Naive thymus-derived CD8-positive, alpha-beta T cell (primary cell): ENCODE measurements at regions of chr10 and their contacts with region 1.

Region 1: GRCh38 chr10:75210282-75211006 is at the start of gene VDAC2:
- DNase-seq: peak; percentile 94 to 100 (median 97)
- ATAC-seq: peak; percentile 84 to 85
- H3K4me3 Mint-ChIP-seq: peak within 1 kb of the TSS; percentile 95 to 100 (median 100)
- H3K27ac Mint-ChIP-seq: peak within 1 kb of the TSS; percentile 99 to 100 (median 100)
- H3K4me1 Mint-ChIP-seq: peaks cover 11 to 35% (median 27%) of the 10 kb centered on the region in 4 donors
- H3K27me3 Mint-ChIP-seq: no peaks in the 10 kb centered on the region
- polyA plus RNA-seq, gene VDAC2: 145 to 155 (median 151) TPM

Region 2: DNA sequence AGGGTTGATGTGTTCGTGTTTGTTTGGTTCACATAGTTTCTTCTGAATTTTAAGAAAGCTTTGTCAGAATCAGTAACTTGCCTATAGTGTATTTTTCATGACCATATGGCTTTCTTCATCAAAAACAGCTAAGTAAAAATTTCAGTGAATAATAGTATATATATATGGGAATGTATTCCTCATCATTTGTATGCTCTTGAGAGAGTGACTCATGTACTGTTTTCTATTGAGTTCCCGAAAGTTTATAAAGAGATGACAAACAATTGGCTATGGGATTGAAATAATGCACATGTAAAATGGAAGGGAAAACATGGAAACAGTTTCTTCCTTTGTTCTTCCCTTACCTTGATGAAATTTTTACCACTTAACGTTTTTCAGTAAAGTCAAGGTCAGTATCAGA is 327.6 kb before region 1 on chr10:
- POLR2A ChIA-PET with region 1: no interaction called
- DNase-seq: no peak
- ATAC-seq: no peak
- H3K4me3 Mint-ChIP-seq: no peak overlapping the region
- H3K27ac Mint-ChIP-seq: no peak overlapping the region
- H3K4me1 Mint-ChIP-seq: peaks cover 30 to 79% (median 70%) of the 10 kb centered on the region in 4 donors
- H3K27me3 Mint-ChIP-seq: no peaks in the 10 kb centered on the region

Region 3: GRCh38 chr10:75111367-75111906 is 99.0 kb before region 1 on chr10 and contains the start of gene SAMD8:
- POLR2A ChIA-PET with region 1: interaction called, 37 read pairs
- DNase-seq: peak; percentile 91 to 97 (median 94)
- ATAC-seq: peak; percentile 76 to 81
- H3K4me3 Mint-ChIP-seq: peak within 1 kb of the TSS; percentile 83 to 97 (median 92)
- H3K27ac Mint-ChIP-seq: peak within 1 kb of the TSS; percentile 91 to 98 (median 96)
- H3K4me1 Mint-ChIP-seq: peaks cover 28 to 63% (median 59%) of the 10 kb centered on the region in 4 donors
- H3K27me3 Mint-ChIP-seq: no peaks in the 10 kb centered on the region
- polyA plus RNA-seq, gene SAMD8: 6.3 to 10.6 (median 6.4) TPM

Region 4: DNA sequence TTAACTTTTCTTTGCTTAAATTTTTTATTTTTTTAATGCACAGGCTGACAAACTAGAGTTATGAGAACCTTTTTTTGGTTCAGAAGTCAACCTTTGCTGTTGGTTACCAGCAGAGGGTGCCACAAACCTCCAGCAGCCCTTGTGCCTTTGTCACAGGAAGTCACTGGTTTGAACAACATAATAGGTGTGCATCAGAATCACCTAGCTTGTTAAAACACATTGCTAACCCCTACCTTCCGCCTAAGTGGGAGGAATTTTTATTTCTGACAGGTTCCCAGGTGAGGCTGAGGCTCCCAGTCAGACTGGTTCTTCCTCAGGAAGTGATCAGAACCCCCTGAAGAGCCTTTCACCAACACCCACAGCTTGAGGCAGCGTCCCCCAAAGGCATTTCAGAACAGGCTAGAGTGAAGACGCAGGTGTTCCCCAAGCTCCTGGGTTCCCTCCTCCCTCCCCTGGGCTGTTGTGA is 22.4 kb before region 1 on chr10:
- POLR2A ChIA-PET with region 1: interaction called, 56 read pairs
- DNase-seq: peak; percentile 37 to 87 (median 76)
- ATAC-seq: peak; percentile 97 to 99
- H3K4me3 Mint-ChIP-seq: peak overlapping the region in 6 of 10 donors; percentile 26 to 68 (median 50)
- H3K27ac Mint-ChIP-seq: peak overlapping the region; percentile 83 to 98 (median 95)
- H3K4me1 Mint-ChIP-seq: peaks cover 6 to 14% (median 6%) of the 10 kb centered on the region in 4 donors
- H3K27me3 Mint-ChIP-seq: no peaks in the 10 kb centered on the region

Region 5: DNA sequence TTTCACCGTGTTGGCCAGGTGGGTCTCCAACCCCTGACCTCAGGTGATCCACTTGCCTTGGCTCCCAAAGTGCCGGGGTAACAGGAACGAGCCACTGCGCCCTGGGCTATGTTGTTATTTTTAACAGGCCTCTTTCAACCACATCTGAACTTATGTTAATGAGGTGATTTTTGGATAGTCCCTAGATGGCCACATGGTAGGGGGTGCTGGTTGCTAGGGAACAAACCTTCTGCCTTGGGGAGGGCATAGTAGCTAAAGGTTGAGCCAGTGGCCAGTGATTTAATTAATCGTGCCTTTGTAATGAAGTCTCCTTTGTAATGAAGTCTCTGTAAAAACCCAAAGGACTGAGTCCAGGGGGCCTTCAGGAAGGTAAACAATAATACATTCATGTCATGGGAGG is 16.2 kb after region 1 on chr10:
- POLR2A ChIA-PET with region 1: interaction called, 132 read pairs
- DNase-seq: no peak
- ATAC-seq: no peak
- H3K4me3 Mint-ChIP-seq: no peak overlapping the region
- H3K27ac Mint-ChIP-seq: peak overlapping the region in 9 of 10 donors; percentile 28 to 83 (median 59)
- H3K4me1 Mint-ChIP-seq: peaks cover 24 to 65% (median 59%) of the 10 kb centered on the region in 4 donors
- H3K27me3 Mint-ChIP-seq: no peaks in the 10 kb centered on the region

Region 6: DNA sequence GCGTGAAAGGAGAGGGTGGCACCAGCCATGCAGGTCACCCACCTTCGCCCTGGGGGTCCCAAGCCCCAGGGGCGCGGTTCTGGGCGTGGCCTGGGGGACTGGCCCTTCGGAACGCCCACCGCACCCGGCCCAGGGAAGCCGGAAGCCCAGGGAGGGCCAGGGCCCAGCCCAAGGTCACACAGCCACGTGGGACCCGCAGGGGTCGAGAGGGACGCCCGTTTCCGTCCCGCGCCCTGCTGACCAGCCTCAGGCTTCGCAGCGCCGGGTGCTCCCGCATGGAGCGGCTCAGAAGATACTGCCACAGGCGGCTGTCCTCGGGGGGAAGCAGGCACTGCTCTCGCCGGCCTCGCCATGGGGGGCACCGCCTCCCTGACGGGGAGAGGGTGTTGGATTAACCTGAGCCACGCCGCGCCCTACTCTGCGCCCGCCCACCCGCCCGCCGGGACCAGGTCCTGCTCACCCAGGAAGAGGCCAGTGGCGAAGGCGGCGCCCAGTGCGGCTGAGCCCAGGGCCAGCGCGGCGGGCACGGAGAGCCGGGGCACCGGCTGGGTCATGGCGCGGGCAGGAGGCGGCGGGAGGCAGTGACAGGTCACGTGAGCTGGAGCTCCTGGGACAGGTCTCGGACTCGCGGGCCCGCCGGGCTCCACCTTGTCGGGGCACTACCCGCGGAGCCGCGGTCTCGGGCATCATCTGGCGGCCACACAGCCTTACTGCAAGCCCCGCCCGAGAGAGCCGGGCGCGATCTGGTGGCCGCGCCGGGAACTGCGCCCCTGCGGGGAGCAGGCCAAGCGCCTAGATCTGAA is 25.1 kb after region 1 on chr10 and contains the start of gene COMTD1:
- POLR2A ChIA-PET with region 1: interaction called, 132 read pairs
- DNase-seq: peak; percentile 86 to 95 (median 93)
- ATAC-seq: peak; percentile 66 to 72
- H3K4me3 Mint-ChIP-seq: peak within 1 kb of the TSS; percentile 71 to 91 (median 82)
- H3K27ac Mint-ChIP-seq: peak within 1 kb of the TSS; percentile 86 to 96 (median 92)
- H3K4me1 Mint-ChIP-seq: peaks cover 6 to 25% (median 18%) of the 10 kb centered on the region in 4 donors
- H3K27me3 Mint-ChIP-seq: peaks cover 0 to 1% (median 0%) of the 10 kb centered on the region in 5 donors
- polyA plus RNA-seq, gene COMTD1: 8.1 to 26.0 (median 9.4) TPM

Region 7: GRCh38 chr10:75294866-75295701 is 84.6 kb after region 1 on chr10:
- POLR2A ChIA-PET with region 1: interaction called, 17 read pairs
- DNase-seq: peak; percentile 45 to 80 (median 60)
- ATAC-seq: peak; percentile 84 to 86
- H3K4me3 Mint-ChIP-seq: peak overlapping the region in 9 of 10 donors; percentile 80 to 92 (median 87)
- H3K27ac Mint-ChIP-seq: peak overlapping the region in 8 of 10 donors; percentile 69 to 91 (median 86)
- H3K4me1 Mint-ChIP-seq: peaks cover 0 to 7% (median 3%) of the 10 kb centered on the region in 4 donors
- H3K27me3 Mint-ChIP-seq: peaks cover 0 to 12% (median 3%) of the 10 kb centered on the region in 5 donors